CD14-positive monocyte (primary cell): ENCODE measurements at regions of chr22 and their contacts with region 1.

Region 1: DNA sequence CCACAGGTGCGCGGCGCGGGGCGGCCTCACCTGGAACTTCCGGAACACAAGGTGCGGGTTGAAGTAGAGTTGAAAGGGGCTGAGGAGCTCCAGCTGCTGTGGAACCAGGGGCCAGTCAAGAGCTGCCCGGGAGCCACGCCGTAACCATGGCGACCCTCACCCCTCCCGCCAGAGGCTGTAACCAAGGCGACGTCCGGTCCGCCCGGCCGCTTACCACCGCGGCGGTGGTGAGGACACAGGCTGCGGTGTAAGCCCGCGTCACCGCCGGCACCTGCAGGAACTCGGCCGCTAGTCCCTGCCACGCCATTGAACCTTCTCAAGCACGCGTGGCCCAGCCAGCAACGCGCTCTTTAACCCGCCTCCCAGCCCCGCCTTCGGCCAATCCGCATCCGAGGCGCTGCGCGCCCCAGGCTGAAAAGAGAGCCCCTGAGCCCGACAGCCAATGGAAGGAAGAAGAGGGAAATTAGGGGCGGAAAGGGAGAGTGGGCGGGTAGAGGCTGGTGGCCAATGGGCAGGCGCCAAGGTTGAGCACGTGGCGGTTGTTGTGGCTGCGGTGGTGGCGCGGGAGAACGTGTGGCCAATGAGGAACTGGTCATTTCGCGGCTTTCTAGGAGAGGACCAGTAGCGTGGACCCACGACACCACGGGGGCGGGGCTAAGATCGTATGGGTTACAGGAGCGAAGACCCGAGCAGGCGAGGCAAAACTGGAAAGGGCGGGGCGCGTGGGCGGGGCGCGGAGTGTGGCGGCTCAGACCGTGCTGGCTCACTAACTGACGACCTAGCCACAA is at the start of gene DERL3:
- DNase-seq: peak; percentile 99 to 100 (median 100)
- H3K4me3 ChIP-seq: peak within 1 kb of the TSS; percentile 36 to 73 (median 49)
- H3K4me3 Mint-ChIP-seq: peak within 1 kb of the TSS; percentile 83 to 88
- H3K27ac ChIP-seq: peak within 1 kb of the TSS in 1 of 2 donors; percentile 53
- H3K27ac Mint-ChIP-seq: peak within 1 kb of the TSS; percentile 72 to 94 (median 85)
- H3K4me1 ChIP-seq: peaks cover 16 to 17% of the 10 kb centered on the region in 2 donors
- H3K4me1 Mint-ChIP-seq: peaks cover 20% of the 10 kb centered on the region
- H3K27me3 ChIP-seq: no peaks in the 10 kb centered on the region
- H3K27me3 Mint-ChIP-seq: peaks cover 3 to 8% (median 4%) of the 10 kb centered on the region in 3 donors
- CTCF ChIP-seq: no peak
- polyA plus RNA-seq, gene DERL3: 0.23 to 0.64 (median 0.28) TPM

Region 2: DNA sequence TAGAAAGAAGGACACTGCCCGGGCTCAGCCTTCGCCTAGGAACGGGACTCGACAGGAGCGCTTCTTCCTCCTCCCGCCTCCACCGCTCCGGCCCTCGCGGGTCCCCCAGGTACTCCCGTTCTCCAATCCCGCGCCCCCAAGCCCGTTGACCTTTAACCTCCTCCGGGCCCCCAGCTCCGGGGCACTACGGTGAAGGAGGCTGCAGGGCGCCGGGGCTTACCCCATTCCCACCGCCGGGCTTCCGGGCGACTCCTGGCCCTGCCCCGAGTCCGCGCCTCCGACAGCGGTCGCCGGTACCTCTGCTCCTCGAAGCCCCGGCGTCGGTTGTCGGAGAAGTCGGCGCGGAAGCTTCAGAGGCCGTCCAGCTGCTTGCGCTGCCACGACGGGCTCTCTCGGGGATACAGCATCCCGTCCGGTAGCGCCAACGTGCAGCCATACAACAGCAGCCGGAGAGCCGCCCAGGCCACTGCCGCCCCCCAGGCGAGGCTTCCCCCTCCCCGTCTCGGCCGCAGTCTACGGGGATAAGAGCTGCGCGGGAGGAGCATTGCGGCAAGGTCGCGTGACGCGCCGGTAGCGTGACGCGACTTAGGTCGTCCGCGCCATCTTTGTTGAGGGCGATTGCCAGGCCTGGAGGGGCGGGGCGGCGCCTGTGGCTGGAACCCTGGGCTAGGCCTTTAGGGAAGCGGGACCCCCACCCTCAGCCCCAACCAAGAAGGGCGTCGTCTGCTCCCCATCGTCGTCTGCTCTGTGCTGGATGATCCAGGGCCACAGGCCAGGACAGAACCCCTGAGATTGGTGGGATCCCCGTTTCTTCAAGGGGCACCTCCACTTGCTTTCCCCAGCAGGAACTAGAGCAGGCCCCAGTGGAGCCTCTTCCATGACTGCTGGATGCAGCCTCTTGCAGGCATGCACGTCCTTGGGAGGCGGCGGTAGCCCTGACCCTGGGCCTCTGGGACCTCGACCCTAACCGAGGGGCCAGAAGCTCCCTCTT is 121.8 kb before region 1 on chr22:
- intact Hi-C with region 1: loop called in 1 of 2 experiments (anchors 5 kb)
- DNase-seq: peak; percentile 81 to 88 (median 83)
- H3K4me3 ChIP-seq: peak overlapping the region; percentile 69 to 90 (median 80)
- H3K4me3 Mint-ChIP-seq: peak overlapping the region; percentile 80 to 82
- H3K27ac ChIP-seq: peak overlapping the region; percentile 10 to 92
- H3K27ac Mint-ChIP-seq: peak overlapping the region; percentile 45 to 91 (median 83)
- H3K4me1 ChIP-seq: peaks cover 15 to 26% of the 10 kb centered on the region in 2 donors
- H3K4me1 Mint-ChIP-seq: peaks cover 21% of the 10 kb centered on the region
- H3K27me3 ChIP-seq: no peaks in the 10 kb centered on the region
- H3K27me3 Mint-ChIP-seq: peaks cover 1 to 3% (median 1%) of the 10 kb centered on the region in 3 donors
- CTCF ChIP-seq: no peak

Region 3: DNA sequence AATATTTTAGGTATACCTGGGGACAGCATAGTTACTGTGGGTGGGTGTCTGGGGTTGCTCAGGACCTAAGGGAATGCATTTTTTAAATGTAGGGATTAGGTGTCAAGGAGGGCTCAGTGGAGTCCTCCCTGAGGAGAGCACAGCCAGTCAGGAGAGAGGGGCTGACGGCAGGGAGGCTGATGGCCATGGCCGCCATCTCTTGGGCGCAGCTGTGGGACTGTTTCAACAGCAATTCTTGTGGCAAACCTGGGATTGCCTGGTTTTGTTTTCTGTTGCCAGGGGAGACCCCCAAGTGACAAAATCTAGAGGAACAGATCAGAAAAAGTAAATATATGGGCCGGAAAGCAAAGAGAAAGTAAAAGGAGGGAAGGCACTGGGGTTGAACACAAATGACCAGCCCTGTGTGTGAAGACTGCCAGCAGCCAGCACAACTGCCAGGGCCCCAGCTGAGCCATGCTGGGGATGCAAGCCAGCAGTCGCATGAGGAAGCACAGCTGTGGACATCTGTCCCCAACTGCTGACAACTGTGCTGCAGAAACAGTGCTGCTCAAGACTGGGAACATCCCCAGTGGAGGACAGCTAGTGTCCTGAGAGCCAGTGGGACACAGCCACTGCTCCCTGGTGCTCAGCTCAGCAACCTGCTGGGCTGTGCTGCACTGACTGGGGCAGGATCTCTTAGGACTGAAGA is 65.8 kb after region 1 on chr22:
- intact Hi-C with region 1: no loop called
- DNase-seq: no peak
- H3K4me3 ChIP-seq: no peak overlapping the region
- H3K4me3 Mint-ChIP-seq: no peak overlapping the region
- H3K27ac ChIP-seq: no peak overlapping the region
- H3K27ac Mint-ChIP-seq: no peak overlapping the region
- H3K4me1 ChIP-seq: no peaks in the 10 kb centered on the region
- H3K4me1 Mint-ChIP-seq: no peaks in the 10 kb centered on the region
- H3K27me3 ChIP-seq: no peaks in the 10 kb centered on the region
- H3K27me3 Mint-ChIP-seq: peaks cover 1 to 6% (median 2%) of the 10 kb centered on the region in 3 donors
- CTCF ChIP-seq: no peak